ENCODE measurements at regions of chr7 and their contacts with region 1.

Region 1: DNA sequence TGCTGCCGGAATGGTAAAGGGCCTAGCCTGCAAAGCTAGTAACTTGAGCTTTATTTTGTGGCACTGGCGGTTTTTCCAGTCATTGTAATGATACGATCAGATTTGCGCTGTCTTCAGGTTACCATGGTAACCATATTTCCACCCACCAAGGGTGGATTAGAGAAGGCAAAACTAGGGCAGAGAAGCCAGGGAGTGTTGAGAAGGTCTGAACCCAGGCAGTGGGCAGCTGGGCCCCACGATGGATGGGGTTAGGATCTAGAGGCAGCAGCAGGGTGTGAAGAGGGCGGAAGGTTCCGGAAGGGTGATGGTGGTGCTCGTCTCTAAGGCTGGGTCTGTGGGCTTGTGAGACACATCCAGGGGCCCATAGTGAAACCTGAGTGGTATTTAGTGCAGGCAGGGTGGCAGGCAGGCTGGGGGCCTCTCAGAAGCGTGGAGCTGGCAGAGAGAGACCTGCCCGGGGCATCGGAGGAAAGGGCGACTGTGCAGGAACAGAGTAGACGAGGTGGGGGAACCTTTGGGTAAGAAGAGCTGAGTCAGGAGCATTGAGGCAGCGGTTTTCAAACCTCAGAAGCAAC is 87.9 kb upstream of the GTF2I start:
- DNase-seq: no peak
- ATAC-seq: no peak

Region 2: DNA sequence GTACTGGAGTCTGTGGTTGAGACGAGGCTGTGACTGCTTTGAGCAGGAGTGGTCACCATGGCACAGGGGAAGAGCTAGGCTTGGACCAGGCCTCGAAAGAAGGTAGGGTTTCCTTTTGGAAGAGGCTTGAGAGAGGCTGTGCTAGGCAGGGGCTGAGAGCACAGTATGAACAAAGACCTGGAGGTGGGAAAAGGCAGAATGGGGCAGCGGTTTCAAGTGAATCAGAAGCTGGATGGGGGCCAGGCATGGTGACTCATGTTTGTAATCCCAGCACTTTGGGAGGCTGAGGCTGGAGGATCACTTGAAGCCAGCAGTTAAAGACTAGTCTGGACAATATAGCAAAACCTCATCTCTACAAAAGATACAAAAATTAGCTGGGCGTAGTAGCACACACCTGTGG is 214.5 kb before region 1 on chr7:
- intact Hi-C with region 1: no loop called
- DNase-seq: no peak
- ATAC-seq: no peak

Region 3: GRCh38 chr7:74417419-74417971 is 152.1 kb before region 1 on chr7:
- intact Hi-C with region 1: loop called (anchors 5 kb)
- DNase-seq: peak; percentile 79
- ATAC-seq: peak; percentile 95

Region 4: DNA sequence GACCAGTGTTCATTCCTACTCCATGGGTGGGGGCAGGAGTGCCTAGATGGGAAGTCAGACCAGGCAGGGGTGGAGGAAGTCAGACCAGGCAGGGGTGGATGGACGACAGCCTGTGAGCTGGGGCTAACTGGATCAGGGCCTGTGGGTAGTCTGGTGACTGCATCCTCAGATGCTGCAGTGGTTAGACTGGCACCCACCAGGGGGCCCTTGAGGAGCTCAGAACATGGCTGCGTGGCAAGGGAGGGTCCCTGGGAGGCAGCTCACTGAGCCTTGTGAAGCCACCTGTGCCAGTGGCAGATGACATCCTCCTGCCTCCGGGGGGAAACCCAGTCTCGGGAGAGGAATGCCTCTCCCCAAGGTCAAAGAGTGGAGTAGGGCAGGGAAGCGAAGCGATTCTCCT is 469.0 kb after region 1 on chr7:
- intact Hi-C with region 1: no loop called
- DNase-seq: no peak
- ATAC-seq: no peak

Measured in Right ventricle myocardium superior (tissue), 1 donor.